ENCODE measurements at regions of chr10 and their contacts with region 1.

Region 1: GRCh38 chr10:3043512-3044368 is 23.6 kb upstream of the PFKP start:
- DNase-seq: peak; percentile 64
- H3K4me3 ChIP-seq: no peak overlapping the region
- H3K27ac ChIP-seq: peak overlapping the region in 1 of 2 donors; percentile 37
- H3K4me1 ChIP-seq: no peaks in the 10 kb centered on the region
- H3K27me3 ChIP-seq: no peaks in the 10 kb centered on the region
- CTCF ChIP-seq: peak; percentile 17 to 82 (median 73)
- POLR2A ChIP-seq: no peak

Region 2: GRCh38 chr10:2658780-2659179 is 385.0 kb before region 1 on chr10:
- intact Hi-C with region 1: no loop called
- DNase-seq: no peak
- H3K4me3 ChIP-seq: no peak overlapping the region
- H3K27ac ChIP-seq: no peak overlapping the region
- H3K4me1 ChIP-seq: no peaks in the 10 kb centered on the region
- H3K27me3 ChIP-seq: no peaks in the 10 kb centered on the region
- CTCF ChIP-seq: no peak
- POLR2A ChIP-seq: no peak

Region 3: DNA sequence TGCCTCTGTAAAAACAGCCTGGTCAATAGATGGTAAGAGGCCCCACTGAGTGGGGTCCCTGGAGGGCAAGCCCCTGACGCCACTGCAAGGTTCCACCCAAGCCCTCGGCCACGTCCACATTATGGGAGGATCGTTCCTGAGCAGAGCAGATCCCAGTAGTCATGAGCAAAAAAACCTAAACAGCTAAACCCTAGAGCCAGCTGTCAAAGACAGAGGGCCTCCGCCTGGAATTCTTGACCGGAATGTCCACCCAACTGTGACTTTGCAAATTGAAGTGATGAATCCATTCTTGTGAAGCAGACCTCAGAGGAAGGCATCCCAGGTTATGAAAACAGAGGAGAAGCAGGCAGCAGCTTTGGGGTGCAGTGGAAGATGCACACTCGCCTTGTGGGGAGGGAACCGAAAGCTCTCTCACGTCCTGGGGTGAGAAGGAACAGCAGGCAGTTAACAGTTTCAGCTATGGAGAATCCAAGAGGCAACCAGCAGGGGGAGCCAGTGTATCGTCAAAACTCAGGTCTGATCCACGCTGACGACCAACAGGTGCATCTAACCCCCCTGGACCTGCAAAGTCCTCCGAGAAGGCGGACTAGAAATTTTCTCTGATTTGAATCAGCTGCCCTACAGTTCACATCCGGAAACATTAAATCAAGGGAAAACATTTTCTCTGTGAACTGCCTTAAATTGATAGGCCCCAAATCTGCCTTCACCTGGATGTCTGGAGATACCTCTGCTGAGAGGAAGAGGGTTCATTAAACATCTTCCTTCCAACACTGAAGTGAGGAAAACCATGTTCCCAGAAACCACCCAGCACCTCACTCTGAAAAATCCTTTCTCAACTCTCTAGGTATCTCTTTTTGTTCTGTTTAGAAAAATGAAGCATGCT is 115.5 kb before region 1 on chr10:
- intact Hi-C with region 1: loop called (anchors 2 kb)
- DNase-seq: peak; percentile 73
- H3K4me3 ChIP-seq: no peak overlapping the region
- H3K27ac ChIP-seq: no peak overlapping the region
- H3K4me1 ChIP-seq: no peaks in the 10 kb centered on the region
- H3K27me3 ChIP-seq: no peaks in the 10 kb centered on the region
- CTCF ChIP-seq: peak; percentile 20 to 83 (median 71)
- POLR2A ChIP-seq: no peak

Region 4: GRCh38 chr10:3068201-3068967 is 24.6 kb after region 1 on chr10:
- intact Hi-C with region 1: loop called (anchors 2 kb)
- DNase-seq: peak; percentile 50
- H3K4me3 ChIP-seq: peak overlapping the region; percentile 52 to 72
- H3K27ac ChIP-seq: peak overlapping the region; percentile 59 to 70
- H3K4me1 ChIP-seq: peaks cover 3% of the 10 kb centered on the region
- H3K27me3 ChIP-seq: no peaks in the 10 kb centered on the region
- CTCF ChIP-seq: peak in 2 of 4 experiments; percentile 32 to 38
- POLR2A ChIP-seq: no peak

Region 5: GRCh38 chr10:3095373-3096139 is 51.8 kb after region 1 on chr10:
- intact Hi-C with region 1: loop called (anchors 2 kb)
- DNase-seq: peak; percentile 53
- H3K4me3 ChIP-seq: no peak overlapping the region
- H3K27ac ChIP-seq: peak overlapping the region; percentile 18 to 55
- H3K4me1 ChIP-seq: no peaks in the 10 kb centered on the region
- H3K27me3 ChIP-seq: no peaks in the 10 kb centered on the region
- CTCF ChIP-seq: no peak
- POLR2A ChIP-seq: no peak